Heart right ventricle (tissue), 16 donors: ENCODE measurements at regions of chr12 and their contacts with region 1.

Region 1: DNA sequence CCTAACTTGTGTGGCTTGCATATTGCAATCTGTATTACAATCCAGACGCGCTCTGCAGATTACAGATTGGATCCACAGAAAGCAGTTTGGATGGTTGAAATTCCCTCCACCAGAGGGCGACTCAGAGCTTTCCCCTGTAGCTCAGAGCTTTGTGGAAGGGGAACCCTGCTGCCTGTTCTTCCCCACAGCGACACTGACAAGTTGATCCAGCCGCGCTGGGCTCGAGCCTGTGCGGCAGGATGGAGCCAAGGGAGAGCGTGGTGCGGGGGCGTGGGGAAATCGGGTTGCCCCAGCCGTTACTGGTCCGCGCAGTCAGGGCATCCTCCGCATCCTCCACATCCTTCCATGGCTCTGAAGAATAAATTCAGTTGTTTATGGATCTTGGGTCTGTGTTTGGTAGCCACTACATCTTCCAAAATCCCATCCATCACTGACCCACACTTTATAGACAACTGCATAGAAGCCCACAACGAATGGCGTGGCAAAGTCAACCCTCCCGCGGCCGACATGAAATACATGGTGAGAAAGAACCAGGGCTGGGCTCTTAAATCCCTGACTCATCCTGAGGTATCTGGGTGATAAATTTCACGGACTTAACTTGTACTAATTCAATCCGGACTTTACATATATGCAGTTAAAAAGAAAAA is at the start of gene GLIPR1L1:
- DNase-seq: peak; percentile 69 to 91
- ATAC-seq: peak; percentile 81 to 92 (median 87)
- H3K4me3 ChIP-seq: peak within 1 kb of the TSS in 9 of 10 donors; percentile 15 to 55 (median 52)
- H3K27ac ChIP-seq: peak within 1 kb of the TSS in 1 of 10 donors; percentile 23
- H3K4me1 ChIP-seq: peaks cover 0 to 13% (median 3%) of the 10 kb centered on the region in 9 donors
- H3K27me3 ChIP-seq: peaks cover 0 to 4% (median 0%) of the 10 kb centered on the region in 7 donors
- CTCF ChIP-seq: peak; percentile 86 to 95 (median 93)
- total RNA-seq, gene GLIPR1L1: not detected

Region 2: DNA sequence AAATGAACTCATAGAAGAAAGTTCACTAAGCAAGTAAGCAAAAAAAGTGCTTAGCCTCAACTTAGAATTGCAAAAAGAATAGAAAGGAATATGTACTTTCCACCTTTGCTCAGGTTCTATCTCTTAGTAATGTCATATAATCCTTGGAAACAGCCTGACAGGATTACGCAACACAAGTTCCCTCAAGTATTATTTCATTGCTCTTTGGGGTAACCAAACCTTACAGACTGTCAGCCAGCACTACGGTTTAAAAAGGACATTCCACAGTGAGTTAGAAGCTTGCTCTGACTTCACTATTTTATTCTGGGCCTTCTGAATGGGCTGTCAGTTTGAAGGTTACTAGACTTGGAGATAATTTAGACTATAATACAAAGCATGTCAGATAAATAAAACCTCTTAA is 532.9 kb before region 1 on chr12:
- intact Hi-C with region 1: no loop called
- DNase-seq: no peak
- ATAC-seq: no peak
- H3K4me3 ChIP-seq: no peak overlapping the region
- H3K27ac ChIP-seq: no peak overlapping the region
- H3K4me1 ChIP-seq: no peaks in the 10 kb centered on the region
- H3K27me3 ChIP-seq: no peaks in the 10 kb centered on the region
- CTCF ChIP-seq: no peak

Region 3: GRCh38 chr12:75315518-75315917 is 19.0 kb before region 1 on chr12:
- intact Hi-C with region 1: no loop called
- DNase-seq: no peak
- ATAC-seq: no peak
- H3K4me3 ChIP-seq: no peak overlapping the region
- H3K27ac ChIP-seq: no peak overlapping the region
- H3K4me1 ChIP-seq: no peaks in the 10 kb centered on the region
- H3K27me3 ChIP-seq: no peaks in the 10 kb centered on the region
- CTCF ChIP-seq: no peak

Region 4: GRCh38 chr12:75390899-75391538 is 56.5 kb after region 1 on chr12 and contains the start of gene GLIPR1L2:
- intact Hi-C with region 1: loop called in 6 of 10 experiments (anchors 2 to 10 kb)
- DNase-seq: peak; percentile 95 to 96
- ATAC-seq: peak; percentile 99 to 100 (median 100)
- H3K4me3 ChIP-seq: peak within 1 kb of the TSS; percentile 25 to 70 (median 60)
- H3K27ac ChIP-seq: peak within 1 kb of the TSS; percentile 66 to 96 (median 89)
- H3K4me1 ChIP-seq: peaks cover 0 to 33% (median 24%) of the 10 kb centered on the region in 9 donors
- H3K27me3 ChIP-seq: no peaks in the 10 kb centered on the region
- CTCF ChIP-seq: peak; percentile 75 to 93 (median 82)
- total RNA-seq, gene GLIPR1L2: 0.66 to 2.9 (median 1.5) TPM

Region 5: GRCh38 chr12:75505706-75506312 is 171.3 kb after region 1 on chr12:
- intact Hi-C with region 1: loop called in 6 of 10 experiments (anchors 5 to 10 kb)
- DNase-seq: no peak
- ATAC-seq: no peak
- H3K4me3 ChIP-seq: no peak overlapping the region
- H3K27ac ChIP-seq: no peak overlapping the region
- H3K4me1 ChIP-seq: peaks cover 0 to 29% (median 23%) of the 10 kb centered on the region in 9 donors
- H3K27me3 ChIP-seq: no peaks in the 10 kb centered on the region
- CTCF ChIP-seq: peak in 8 of 9 donors; percentile 16 to 66 (median 58)